IMR-90 (cell line): ENCODE measurements at regions of chr12 and their contacts with region 1.

Region 1: DNA sequence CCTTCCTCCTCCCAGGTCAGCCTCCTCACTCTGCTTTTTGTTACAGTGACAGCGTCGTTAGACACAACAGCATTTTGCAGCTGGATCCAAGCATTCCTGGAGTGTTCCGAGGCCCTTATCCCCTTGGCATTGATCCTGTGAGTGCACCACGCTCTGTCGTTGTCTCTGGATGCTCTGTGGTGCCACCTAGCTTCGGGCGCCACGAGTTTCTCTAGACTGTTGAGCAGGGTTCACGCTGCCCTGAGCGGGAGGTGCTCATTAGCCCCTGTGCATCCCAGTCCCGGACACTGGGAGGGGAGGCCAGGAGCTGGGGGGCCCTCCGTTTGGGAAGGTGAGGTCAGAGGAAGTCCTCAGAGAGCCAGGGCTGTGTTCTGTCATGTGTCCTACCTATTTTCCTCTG is 17.3 kb upstream of the DNAH10 start:
- DNase-seq: no peak
- ATAC-seq: no peak
- H3K4me3 ChIP-seq: no peak overlapping the region
- H3K27ac ChIP-seq: no peak overlapping the region
- H3K4me1 ChIP-seq: 0 out of 2 replicates have a peak, but pooled peaks cover 1% of the 10 kb centered on the region
- H3K27me3 ChIP-seq: no peaks in the 10 kb centered on the region
- CTCF ChIP-seq: no peak
- POLR2A ChIP-seq: no peak
- RAD21 ChIP-seq: no peak

Region 2: DNA sequence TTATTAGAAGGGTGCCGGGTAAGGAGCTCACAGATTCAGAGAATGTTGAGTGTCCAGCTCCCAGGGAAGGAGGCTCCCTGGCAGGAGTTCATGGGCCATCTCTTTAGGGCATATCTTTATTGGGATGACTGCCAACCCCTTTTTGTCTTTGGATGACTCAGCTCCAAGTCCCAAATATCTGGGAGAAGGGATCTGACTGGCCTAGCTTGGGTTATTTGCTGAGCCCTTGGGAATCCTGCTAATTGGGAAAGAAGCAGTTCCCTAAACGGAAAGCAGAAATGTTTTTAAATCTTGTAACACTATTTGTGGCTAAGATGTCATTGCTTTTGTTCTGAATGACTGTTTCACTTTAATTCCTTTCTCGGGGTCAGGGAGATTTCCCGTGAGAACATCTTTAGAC is 130.3 kb before region 1 on chr12:
- CTCF ChIA-PET with region 1: no interaction called
- POLR2A ChIA-PET with region 1: interaction called, 14 read pairs
- dilution Hi-C with region 1: no loop called
- in situ Hi-C with region 1: no loop called
- intact Hi-C with region 1: no loop called
- DNase-seq: peak; percentile 32
- ATAC-seq: peak; percentile 67; the same call in 1 of the 2 replicates
- H3K4me3 ChIP-seq: no peak overlapping the region
- H3K27ac ChIP-seq: no peak overlapping the region
- H3K4me1 ChIP-seq: 0 out of 2 replicates have a peak, but pooled peaks cover 3% of the 10 kb centered on the region
- H3K27me3 ChIP-seq: no peaks in the 10 kb centered on the region
- CTCF ChIP-seq: no peak
- POLR2A ChIP-seq: no peak
- RAD21 ChIP-seq: no peak

Region 3: DNA sequence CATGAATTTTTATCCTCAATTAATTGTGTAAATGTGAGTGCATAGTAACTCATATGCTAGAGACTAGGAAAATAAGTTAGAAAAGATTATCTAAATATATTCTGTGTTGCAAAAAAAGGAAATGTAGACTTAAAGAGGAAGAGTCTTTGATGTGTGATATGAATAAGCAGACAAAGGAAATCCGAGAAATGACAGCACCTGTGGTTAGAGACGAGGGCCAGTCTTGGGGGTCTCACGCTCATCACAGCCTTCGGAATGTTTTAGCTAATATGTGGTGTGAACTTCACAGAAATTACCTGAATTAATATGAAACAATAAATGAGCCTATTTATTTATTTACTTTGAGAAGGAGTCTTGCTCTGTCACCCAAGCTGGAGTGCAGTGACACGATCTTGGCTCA is 21.1 kb before region 1 on chr12:
- CTCF ChIA-PET with region 1: no interaction called
- POLR2A ChIA-PET with region 1: no interaction called
- dilution Hi-C with region 1: no loop called
- in situ Hi-C with region 1: no loop called
- intact Hi-C with region 1: no loop called
- DNase-seq: no peak
- ATAC-seq: no peak
- H3K4me3 ChIP-seq: no peak overlapping the region
- H3K27ac ChIP-seq: no peak overlapping the region
- H3K4me1 ChIP-seq: no peaks in the 10 kb centered on the region
- H3K27me3 ChIP-seq: no peaks in the 10 kb centered on the region
- CTCF ChIP-seq: no peak
- POLR2A ChIP-seq: no peak
- RAD21 ChIP-seq: no peak

Region 4: GRCh38 chr12:123828854-123829547 is 84.2 kb after region 1 on chr12:
- CTCF ChIA-PET with region 1: no interaction called
- POLR2A ChIA-PET with region 1: no interaction called
- dilution Hi-C with region 1: no loop called
- in situ Hi-C with region 1: no loop called
- intact Hi-C with region 1: no loop called
- DNase-seq: no peak
- ATAC-seq: no peak
- H3K4me3 ChIP-seq: no peak overlapping the region
- H3K27ac ChIP-seq: no peak overlapping the region
- H3K4me1 ChIP-seq: no peaks in the 10 kb centered on the region
- H3K27me3 ChIP-seq: peaks cover 15% of the 10 kb centered on the region
- CTCF ChIP-seq: no peak
- POLR2A ChIP-seq: no peak
- RAD21 ChIP-seq: no peak